Heart left ventricle (tissue), 16 donors: ENCODE measurements at regions of chr12 and their contacts with region 1.

Region 1: GRCh38 chr12:117025481-117026151 is 73.6 kb downstream of the TESC start:
- DNase-seq: peak in 4 of 5 donors; percentile 68 to 73 (median 70)
- ATAC-seq: peak; percentile 84 to 94 (median 88)
- H3K4me3 ChIP-seq: no peak overlapping the region
- H3K27ac ChIP-seq: peak overlapping the region in 9 of 12 donors; percentile 20 to 65 (median 52)
- H3K4me1 ChIP-seq: peaks cover 0 to 26% (median 9%) of the 10 kb centered on the region in 12 donors
- H3K27me3 ChIP-seq: no peaks in the 10 kb centered on the region
- CTCF ChIP-seq: peak; percentile 89 to 98 (median 94)
- POLR2A ChIP-seq: no peak

Region 2: GRCh38 chr12:117119592-117120198 is 94.1 kb after region 1 on chr12:
- intact Hi-C with region 1: loop called (anchors 1 to 10 kb)
- DNase-seq: no peak
- ATAC-seq: peak; percentile 29 to 40 (median 38)
- H3K4me3 ChIP-seq: no peak overlapping the region
- H3K27ac ChIP-seq: peak overlapping the region in 9 of 12 donors; percentile 13 to 68 (median 33)
- H3K4me1 ChIP-seq: peaks cover 12 to 44% (median 24%) of the 10 kb centered on the region in 12 donors
- H3K27me3 ChIP-seq: no peaks in the 10 kb centered on the region
- CTCF ChIP-seq: peak; percentile 57 to 71 (median 63)
- POLR2A ChIP-seq: no peak

Region 3: DNA sequence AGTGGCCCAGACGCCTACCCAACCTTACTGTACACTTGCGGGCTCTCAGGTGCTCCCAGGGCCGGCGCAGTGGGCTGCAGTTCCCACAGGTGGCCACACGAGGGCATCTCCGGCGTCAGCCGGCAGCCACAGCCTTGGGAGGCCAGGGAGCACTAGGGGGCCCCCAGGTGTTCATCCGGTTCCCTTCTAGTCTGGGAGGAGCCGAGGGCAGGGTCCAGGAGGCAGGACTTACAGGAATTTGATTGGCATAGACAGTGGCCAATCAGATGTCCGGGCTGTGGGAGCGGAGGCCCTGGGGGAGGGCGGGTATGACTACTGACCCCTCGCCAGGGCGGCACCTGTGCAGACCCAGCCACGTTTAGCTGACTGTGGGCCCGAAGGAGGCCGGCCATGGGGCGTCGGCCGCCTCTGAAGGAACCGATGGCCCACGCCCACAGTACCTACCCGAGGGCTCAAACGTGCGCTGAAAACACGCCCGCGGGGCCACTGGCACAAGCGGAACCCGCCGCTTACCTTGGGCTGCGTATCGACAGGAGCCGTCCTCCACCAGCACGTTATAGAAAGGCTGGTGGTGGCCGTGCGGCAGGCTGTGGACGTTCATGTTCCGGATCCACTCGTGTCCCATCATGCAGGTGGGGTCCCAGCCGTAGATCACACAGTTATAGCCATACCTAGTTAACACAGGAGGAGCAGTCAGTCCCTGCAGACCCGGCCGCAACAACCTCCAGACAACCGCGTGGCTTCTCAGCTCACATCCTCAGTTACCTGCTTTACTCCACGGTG is 129.9 kb after region 1 on chr12:
- intact Hi-C with region 1: loop called (anchors 1 to 10 kb)
- DNase-seq: peak; percentile 34 to 68 (median 55)
- ATAC-seq: peak; percentile 34 to 76 (median 64)
- H3K4me3 ChIP-seq: no peak overlapping the region
- H3K27ac ChIP-seq: no peak overlapping the region
- H3K4me1 ChIP-seq: peaks cover 0 to 13% (median 0%) of the 10 kb centered on the region in 12 donors
- H3K27me3 ChIP-seq: no peaks in the 10 kb centered on the region
- CTCF ChIP-seq: peak; percentile 57 to 83 (median 70)
- POLR2A ChIP-seq: no peak